ENCODE measurements at regions of chr7 and their contacts with region 1.

Region 1: GRCh38 chr7:26200444-26201246 is at the start of gene HNRNPA2B1:
- DNase-seq: peak; percentile 99
- H3K4me3 ChIP-seq: peak within 1 kb of the TSS; percentile 83 to 98 (median 94)
- H3K27ac ChIP-seq: peak within 1 kb of the TSS; percentile 97 to 99 (median 98)
- H3K4me1 ChIP-seq: peaks cover 0 to 55% (median 49%) of the 10 kb centered on the region in 4 donors
- H3K27me3 ChIP-seq: no peaks in the 10 kb centered on the region
- CTCF ChIP-seq: peak in 2 of 4 experiments; percentile 4 to 16
- EP300 ChIP-seq: no peak
- POLR2A ChIP-seq: peak; percentile 100
- total RNA-seq, gene HNRNPA2B1: 141 to 208 (median 181) TPM

Region 2: GRCh38 chr7:26011039-26011696 is 189.5 kb before region 1 on chr7:
- intact Hi-C with region 1: no loop called
- DNase-seq: no peak
- H3K4me3 ChIP-seq: no peak overlapping the region
- H3K27ac ChIP-seq: no peak overlapping the region
- H3K4me1 ChIP-seq: no peaks in the 10 kb centered on the region
- H3K27me3 ChIP-seq: no peaks in the 10 kb centered on the region
- CTCF ChIP-seq: no peak
- EP300 ChIP-seq: no peak
- POLR2A ChIP-seq: no peak

Region 3: DNA sequence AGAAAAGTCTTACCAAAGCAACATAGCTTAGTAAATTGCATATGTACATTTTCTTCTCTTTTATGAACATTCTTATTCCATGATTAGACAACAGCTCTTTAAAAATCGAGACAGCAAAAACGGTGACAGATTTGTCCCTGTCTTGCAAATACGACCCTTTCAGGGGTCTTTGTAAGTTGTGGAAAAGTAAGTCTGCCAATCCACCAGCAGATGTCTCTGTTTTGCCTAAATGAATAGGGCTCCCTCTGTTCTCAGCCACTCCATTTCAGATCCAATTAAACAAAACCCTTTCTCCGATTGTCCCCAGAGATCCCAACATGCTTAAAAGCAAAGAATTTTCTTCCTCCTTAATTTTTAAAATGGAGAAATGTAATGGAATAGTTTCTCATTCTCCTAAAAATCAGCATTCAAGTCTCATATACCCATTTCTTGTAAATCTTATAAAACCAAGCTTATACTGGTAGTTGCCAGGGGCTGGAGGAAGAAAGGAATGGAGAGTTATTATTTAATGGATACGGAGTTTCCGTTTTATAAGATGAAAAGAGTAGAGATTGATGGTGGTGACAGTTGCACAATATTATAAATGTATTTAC is 109.6 kb before region 1 on chr7:
- intact Hi-C with region 1: loop called (anchors 5 kb)
- DNase-seq: no peak
- H3K4me3 ChIP-seq: no peak overlapping the region
- H3K27ac ChIP-seq: no peak overlapping the region
- H3K4me1 ChIP-seq: peaks cover 0 to 8% (median 0%) of the 10 kb centered on the region in 4 donors
- H3K27me3 ChIP-seq: peaks cover 0 to 13% (median 0%) of the 10 kb centered on the region in 3 donors
- CTCF ChIP-seq: peak in 3 of 4 experiments; percentile 37 to 58 (median 41)
- EP300 ChIP-seq: no peak
- POLR2A ChIP-seq: no peak

Region 4: DNA sequence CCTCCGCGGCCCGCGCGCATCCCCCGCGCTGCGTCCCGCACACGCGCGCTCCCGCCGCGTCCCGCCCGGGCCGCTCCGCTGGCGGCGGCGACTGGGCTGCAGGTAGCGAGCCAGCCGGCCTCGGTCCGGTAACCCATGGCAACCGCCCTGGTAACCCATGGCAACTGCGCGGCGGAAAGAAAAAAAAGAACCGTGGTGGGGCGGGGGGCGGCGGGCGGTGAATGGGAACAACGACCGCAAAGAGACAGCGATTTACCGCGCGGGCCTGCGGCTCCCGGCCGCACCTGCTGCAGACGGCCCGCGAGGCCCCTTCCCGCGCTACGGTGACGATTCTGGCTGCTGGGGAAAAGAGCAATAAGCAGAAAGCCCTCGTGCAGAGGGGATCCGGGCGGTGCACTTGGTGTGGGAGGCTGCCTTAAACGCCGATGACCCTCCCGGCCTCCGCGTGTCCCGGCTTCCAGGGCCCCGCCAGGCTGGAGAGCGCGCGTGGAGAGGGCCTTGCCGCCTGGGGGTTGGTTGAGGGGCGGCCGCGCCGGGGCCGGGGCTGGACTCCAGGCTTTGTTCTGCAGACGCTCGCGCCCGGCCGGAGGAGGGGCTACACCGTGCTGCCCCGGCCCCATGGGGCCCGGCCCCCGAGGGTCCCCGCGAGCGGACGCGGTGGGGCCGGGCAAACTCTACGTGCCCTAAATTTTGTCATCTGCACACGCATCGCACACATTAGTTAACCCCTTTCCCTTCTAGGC is 175.7 kb after region 1 on chr7:
- intact Hi-C with region 1: loop called (anchors 5 kb)
- DNase-seq: no peak
- H3K4me3 ChIP-seq: peak overlapping the region in 3 of 4 donors; percentile 31 to 39 (median 35)
- H3K27ac ChIP-seq: peak overlapping the region in 2 of 4 donors; percentile 12 to 33
- H3K4me1 ChIP-seq: peaks cover 0 to 15% (median 12%) of the 10 kb centered on the region in 4 donors
- H3K27me3 ChIP-seq: peaks cover 23 to 94% (median 78%) of the 10 kb centered on the region in 3 donors
- CTCF ChIP-seq: no peak
- EP300 ChIP-seq: no peak
- POLR2A ChIP-seq: no peak

Region 5: DNA sequence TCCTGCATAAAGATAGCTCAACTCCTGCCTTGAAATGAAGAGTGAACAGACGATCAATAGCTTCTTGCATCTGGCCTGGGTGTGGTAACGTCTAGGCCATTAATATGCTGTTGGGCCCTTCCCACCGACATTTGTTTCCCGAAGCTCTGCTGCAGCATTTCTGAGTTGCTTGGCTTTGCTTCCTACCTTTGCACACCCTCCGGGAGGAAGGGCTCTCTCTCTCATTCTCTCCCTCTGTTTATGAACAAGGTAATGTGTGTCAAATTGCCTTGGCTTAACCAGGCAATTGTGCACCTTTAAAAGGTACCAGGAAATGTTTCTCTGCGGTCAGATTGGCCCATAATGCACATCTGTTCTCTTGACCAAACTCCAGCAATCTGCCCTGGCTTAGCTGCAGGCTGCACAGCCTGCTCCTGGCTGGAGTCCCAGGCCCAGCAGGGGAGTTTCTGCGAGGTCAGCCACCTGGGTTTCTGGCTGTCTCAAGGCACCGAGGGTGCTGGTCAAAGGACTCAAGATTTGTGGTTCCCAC is 314.7 kb after region 1 on chr7:
- intact Hi-C with region 1: no loop called
- DNase-seq: no peak
- H3K4me3 ChIP-seq: no peak overlapping the region
- H3K27ac ChIP-seq: no peak overlapping the region
- H3K4me1 ChIP-seq: no peaks in the 10 kb centered on the region
- H3K27me3 ChIP-seq: peaks cover 0 to 4% (median 0%) of the 10 kb centered on the region in 3 donors
- CTCF ChIP-seq: no peak
- EP300 ChIP-seq: no peak
- POLR2A ChIP-seq: no peak

Region 6: GRCh38 chr7:27095897-27096767 is 895.5 kb after region 1 on chr7 and contains the start of gene HOXA1:
- intact Hi-C with region 1: loop called (anchors 5 kb)
- DNase-seq: peak; percentile 93
- H3K4me3 ChIP-seq: peak within 1 kb of the TSS; percentile 77 to 93 (median 90)
- H3K27ac ChIP-seq: peak within 1 kb of the TSS; percentile 93 to 99 (median 94)
- H3K4me1 ChIP-seq: peaks cover 0 to 45% (median 25%) of the 10 kb centered on the region in 4 donors
- H3K27me3 ChIP-seq: no peaks in the 10 kb centered on the region
- CTCF ChIP-seq: no peak
- EP300 ChIP-seq: no peak
- POLR2A ChIP-seq: peak; percentile 43 to 71
- total RNA-seq, gene HOXA1: 0.14 to 1.1 (median 0.95) TPM

Region 7: DNA sequence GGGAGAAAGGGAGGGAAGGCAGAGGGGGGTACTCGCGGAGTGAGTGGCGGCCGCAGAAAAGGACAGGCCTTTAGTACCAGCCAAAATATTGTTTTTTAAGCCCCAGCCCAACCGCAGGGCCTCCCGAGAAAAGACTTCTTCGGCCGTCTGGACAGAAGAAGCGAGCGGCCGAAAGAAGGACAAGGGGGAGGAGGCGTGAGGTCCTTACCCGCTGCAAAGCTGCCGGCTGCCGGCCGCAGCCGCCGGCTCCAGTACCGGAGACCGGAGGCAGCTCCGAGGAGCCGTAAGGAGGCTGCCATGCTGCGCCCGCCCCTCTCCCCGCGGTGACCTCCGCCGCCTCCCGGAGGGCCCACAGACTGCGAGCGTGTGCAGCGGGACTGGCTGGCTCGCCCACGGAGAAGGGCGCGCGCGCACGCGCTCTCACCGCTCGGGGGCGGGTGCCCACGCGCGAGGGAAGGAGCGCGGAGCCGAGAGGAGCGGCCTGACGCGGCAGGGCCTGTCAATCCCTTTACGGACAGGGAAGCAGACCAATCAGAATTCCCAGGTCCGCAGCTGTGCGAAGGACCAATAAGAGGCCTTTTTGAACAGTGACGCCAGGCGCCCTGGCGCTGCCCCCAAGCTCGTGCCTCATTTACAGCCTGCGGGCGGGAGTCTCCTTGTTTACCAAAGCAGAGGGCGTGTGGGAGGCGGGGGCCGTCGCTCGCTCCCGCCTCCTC is 1462.0 kb after region 1 on chr7 and contains the start of gene HIBADH:
- intact Hi-C with region 1: loop called (anchors 10 kb)
- DNase-seq: peak; percentile 100
- H3K4me3 ChIP-seq: peak within 1 kb of the TSS; percentile 72 to 97 (median 90)
- H3K27ac ChIP-seq: peak within 1 kb of the TSS; percentile 91 to 99 (median 93)
- H3K4me1 ChIP-seq: peaks cover 0 to 16% (median 13%) of the 10 kb centered on the region in 4 donors
- H3K27me3 ChIP-seq: no peaks in the 10 kb centered on the region
- CTCF ChIP-seq: peak in 1 of 4 experiments; percentile 17
- EP300 ChIP-seq: peak in 3 of 4 donors; percentile 59 to 88 (median 74)
- POLR2A ChIP-seq: peak; percentile 69 to 84
- total RNA-seq, gene HIBADH: 63.5 to 89.5 (median 80.0) TPM